ENCODE measurements at regions of chr21 and their contacts with region 1.

Region 1: DNA sequence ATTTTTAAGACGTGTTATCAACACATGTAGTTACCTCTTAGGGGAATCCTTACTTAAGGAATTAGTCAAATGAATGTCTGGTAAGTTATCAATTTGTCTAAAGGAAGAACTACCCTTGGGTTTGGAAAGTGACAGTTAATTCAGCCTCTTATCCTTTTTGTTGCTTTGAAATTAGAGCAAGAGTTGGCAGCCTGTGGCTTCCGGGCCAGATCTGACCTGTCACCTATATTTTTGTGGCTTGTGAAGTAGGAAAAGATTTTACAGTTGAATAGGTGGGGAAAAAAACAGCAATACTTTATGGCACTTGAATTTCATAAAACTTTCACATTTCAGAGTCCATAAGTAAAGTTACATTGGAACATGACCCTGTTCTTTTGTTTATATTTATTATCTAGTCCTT is 5.5 kb downstream of the MRPS6 start:
- DNase-seq: no peak
- CTCF ChIP-seq: no peak

Region 2: GRCh38 chr21:34091607-34092006 is 12.7 kb after region 1 on chr21:
- CTCF ChIA-PET with region 1: interaction called, 16 read pairs
- POLR2A ChIA-PET with region 1: interaction called, 6 read pairs
- DNase-seq: no peak
- CTCF ChIP-seq: peak; percentile 6